Mammary epithelial cell (primary cell): ENCODE measurements at regions of chr1 and their contacts with region 1.

Region 1: DNA sequence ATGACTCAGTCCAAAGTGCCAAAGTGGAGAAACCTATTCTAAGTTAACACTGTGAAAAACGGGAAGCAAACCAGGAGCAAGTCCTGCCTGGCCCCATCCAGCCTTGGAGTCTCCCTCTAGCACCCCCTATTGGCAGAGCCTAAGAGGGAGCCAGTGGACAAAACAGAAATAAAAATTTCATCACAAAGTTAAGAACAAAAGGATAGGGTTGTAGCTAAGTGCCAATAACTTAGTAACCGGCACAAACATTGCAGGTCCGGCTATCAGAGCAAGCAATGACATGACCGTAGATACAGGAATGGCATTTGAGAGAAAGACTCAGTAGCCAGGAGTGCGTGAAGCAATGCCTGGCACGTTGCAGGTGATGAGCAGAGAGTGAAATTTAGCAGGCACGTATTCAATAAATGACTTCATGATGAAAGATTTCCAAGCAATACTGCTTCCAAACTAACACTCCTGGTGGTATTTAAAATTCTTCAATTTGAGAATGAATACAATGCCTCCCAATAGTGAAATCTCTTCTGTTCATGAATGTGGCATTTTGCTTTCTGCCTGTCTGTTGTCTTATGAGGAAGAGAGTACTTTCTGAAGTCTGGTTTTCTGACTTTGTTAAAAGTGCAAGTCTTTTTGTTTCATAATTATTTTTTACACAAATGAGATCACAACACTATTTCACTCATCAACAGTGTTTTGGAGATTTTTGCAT is 391.0 kb downstream of the OMA1 start:
- DNase-seq: peak; percentile 40
- H3K4me3 ChIP-seq: no peak overlapping the region
- H3K27ac ChIP-seq: no peak overlapping the region
- H3K4me1 ChIP-seq: no peaks in the 10 kb centered on the region
- H3K27me3 ChIP-seq: no peaks in the 10 kb centered on the region
- CTCF ChIP-seq: peak; percentile 74 to 83

Region 2: GRCh38 chr1:57966751-57967406 is 188.7 kb before region 1 on chr1:
- CTCF ChIA-PET with region 1: no interaction called
- dilution Hi-C with region 1: no loop called
- in situ Hi-C with region 1: no loop called
- intact Hi-C with region 1: no loop called
- DNase-seq: peak; percentile 58
- H3K4me3 ChIP-seq: no peak overlapping the region
- H3K27ac ChIP-seq: no peak overlapping the region
- H3K4me1 ChIP-seq: no peaks in the 10 kb centered on the region
- H3K27me3 ChIP-seq: no peaks in the 10 kb centered on the region
- CTCF ChIP-seq: no peak

Region 3: DNA sequence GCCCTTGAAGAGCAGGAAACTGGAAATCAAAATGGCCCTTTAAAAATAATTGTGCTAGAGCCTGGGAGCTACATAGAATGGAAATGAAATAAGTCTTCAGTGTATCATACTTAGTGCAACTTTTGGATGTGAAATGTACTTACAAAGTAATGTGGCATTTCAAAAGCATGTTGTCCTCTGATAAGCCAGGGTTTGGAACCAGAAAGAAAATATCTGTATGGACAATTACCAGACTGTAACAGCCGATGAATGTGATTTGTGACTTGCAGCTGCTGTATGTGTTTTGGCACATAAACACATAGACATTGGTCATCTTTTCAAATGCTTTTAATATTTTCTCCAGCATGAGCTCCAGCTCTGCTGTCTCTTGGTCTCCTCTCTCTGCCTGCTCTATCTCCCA is 155.5 kb before region 1 on chr1:
- CTCF ChIA-PET with region 1: interaction called, 46 read pairs
- dilution Hi-C with region 1: no loop called
- in situ Hi-C with region 1: no loop called
- intact Hi-C with region 1: no loop called
- DNase-seq: no peak
- H3K4me3 ChIP-seq: no peak overlapping the region
- H3K27ac ChIP-seq: no peak overlapping the region
- H3K4me1 ChIP-seq: no peaks in the 10 kb centered on the region
- H3K27me3 ChIP-seq: no peaks in the 10 kb centered on the region
- CTCF ChIP-seq: no peak

Region 4: GRCh38 chr1:58197811-58198210 is 42.2 kb after region 1 on chr1:
- CTCF ChIA-PET with region 1: no interaction called
- dilution Hi-C with region 1: loop called (anchors 5 kb)
- in situ Hi-C with region 1: no loop called
- intact Hi-C with region 1: no loop called
- DNase-seq: no peak
- H3K4me3 ChIP-seq: no peak overlapping the region
- H3K27ac ChIP-seq: no peak overlapping the region
- H3K4me1 ChIP-seq: no peaks in the 10 kb centered on the region
- H3K27me3 ChIP-seq: peaks cover 4% of the 10 kb centered on the region
- CTCF ChIP-seq: no peak